ENCODE measurements at regions of chr1 and their contacts with region 1.

Region 1: GRCh38 chr1:192609110-192610079 is 26.6 kb upstream of the RGS13 start:
- DNase-seq: peak; percentile 84
- H3K4me3 ChIP-seq: no peak overlapping the region
- H3K27ac ChIP-seq: peak overlapping the region in 3 of 4 donors; percentile 9 to 50 (median 43)
- H3K4me1 ChIP-seq: peaks cover 0 to 23% (median 10%) of the 10 kb centered on the region in 4 donors
- H3K27me3 ChIP-seq: no peaks in the 10 kb centered on the region
- CTCF ChIP-seq: no peak
- EP300 ChIP-seq: no peak
- POLR2A ChIP-seq: no peak

Region 2: DNA sequence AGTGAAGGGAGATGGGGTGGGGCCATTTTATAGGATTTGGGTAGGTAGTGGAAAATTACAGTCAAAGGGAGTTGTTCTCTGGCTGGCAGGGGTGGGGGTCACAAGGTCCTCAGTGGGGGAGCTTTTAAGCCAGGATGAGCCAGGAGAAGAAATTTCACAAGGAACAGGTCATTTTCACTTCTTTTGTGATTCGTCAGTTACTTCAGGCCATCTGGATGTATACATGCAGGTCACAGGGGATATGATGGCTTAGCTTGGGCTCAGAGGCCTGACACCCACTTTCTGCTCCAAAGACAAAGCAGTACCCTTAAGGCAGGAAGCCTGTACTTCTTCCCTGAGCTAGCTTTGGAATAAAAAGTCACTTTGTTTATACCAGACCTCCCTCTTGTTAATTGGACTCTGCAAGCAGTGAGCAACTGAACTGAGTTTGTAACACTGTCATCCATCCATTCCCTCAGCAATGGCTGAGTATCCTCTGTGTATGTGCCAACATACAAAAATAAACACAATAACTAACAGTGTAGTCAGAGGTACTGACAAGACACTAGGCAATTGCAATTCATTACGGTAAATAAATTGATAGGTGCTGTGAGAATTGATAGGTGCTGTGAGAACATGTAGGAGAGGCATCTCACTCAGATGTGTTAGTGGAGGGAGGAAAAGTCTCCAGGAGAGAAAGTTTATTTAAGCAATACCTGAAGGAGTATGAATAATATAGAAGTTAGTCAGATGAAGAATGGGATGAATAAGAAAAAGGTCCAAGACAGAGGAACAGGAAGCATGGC is 184.8 kb after region 1 on chr1:
- intact Hi-C with region 1: no loop called
- DNase-seq: no peak
- H3K4me3 ChIP-seq: no peak overlapping the region
- H3K27ac ChIP-seq: peak overlapping the region in 3 of 4 donors; percentile 50 to 70 (median 66)
- H3K4me1 ChIP-seq: peaks cover 0 to 28% (median 22%) of the 10 kb centered on the region in 4 donors
- H3K27me3 ChIP-seq: no peaks in the 10 kb centered on the region
- CTCF ChIP-seq: no peak
- EP300 ChIP-seq: no peak
- POLR2A ChIP-seq: no peak

Region 3: DNA sequence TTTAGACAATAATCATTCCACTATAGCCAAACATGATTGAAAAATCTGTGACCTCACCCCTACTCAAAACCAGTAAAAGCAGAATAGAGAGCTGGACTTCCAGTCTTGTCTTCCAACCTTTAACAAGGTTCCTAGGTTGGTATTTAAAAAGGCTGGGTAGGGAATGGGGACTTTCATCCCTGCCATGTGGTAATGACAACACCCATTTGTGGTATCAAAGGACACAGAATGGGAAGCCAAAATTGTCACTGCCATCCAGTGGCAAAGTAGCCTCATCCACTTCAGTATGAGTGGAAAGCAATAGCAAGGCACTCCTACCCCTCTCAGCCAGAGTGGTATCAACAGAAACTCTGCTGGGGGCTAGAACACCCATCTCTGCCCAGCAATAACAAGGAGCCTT is 415.8 kb after region 1 on chr1:
- intact Hi-C with region 1: loop called (anchors 5 kb)
- DNase-seq: no peak
- H3K4me3 ChIP-seq: no peak overlapping the region
- H3K27ac ChIP-seq: no peak overlapping the region
- H3K4me1 ChIP-seq: no peaks in the 10 kb centered on the region
- H3K27me3 ChIP-seq: no peaks in the 10 kb centered on the region
- CTCF ChIP-seq: no peak
- EP300 ChIP-seq: no peak
- POLR2A ChIP-seq: no peak

Region 4: GRCh38 chr1:193156826-193157142 is 547.4 kb after region 1 on chr1:
- intact Hi-C with region 1: no loop called
- DNase-seq: no peak
- H3K4me3 ChIP-seq: no peak overlapping the region
- H3K27ac ChIP-seq: no peak overlapping the region
- H3K4me1 ChIP-seq: peaks cover 0 to 18% (median 2%) of the 10 kb centered on the region in 4 donors
- H3K27me3 ChIP-seq: no peaks in the 10 kb centered on the region
- CTCF ChIP-seq: no peak
- EP300 ChIP-seq: no peak
- POLR2A ChIP-seq: no peak